Posterior vena cava (tissue), 2 donors: ENCODE measurements at regions of chr12 and their contacts with region 1.

Region 1: GRCh38 chr12:70733385-70733784 is 96.2 kb upstream of the PTPRB start:
- DNase-seq: no peak

Region 2: GRCh38 chr12:70849265-70849960 is 116.0 kb after region 1 on chr12:
- intact Hi-C with region 1: loop called in 1 of 2 experiments (anchors 5 kb)
- DNase-seq: no peak

Region 3: DNA sequence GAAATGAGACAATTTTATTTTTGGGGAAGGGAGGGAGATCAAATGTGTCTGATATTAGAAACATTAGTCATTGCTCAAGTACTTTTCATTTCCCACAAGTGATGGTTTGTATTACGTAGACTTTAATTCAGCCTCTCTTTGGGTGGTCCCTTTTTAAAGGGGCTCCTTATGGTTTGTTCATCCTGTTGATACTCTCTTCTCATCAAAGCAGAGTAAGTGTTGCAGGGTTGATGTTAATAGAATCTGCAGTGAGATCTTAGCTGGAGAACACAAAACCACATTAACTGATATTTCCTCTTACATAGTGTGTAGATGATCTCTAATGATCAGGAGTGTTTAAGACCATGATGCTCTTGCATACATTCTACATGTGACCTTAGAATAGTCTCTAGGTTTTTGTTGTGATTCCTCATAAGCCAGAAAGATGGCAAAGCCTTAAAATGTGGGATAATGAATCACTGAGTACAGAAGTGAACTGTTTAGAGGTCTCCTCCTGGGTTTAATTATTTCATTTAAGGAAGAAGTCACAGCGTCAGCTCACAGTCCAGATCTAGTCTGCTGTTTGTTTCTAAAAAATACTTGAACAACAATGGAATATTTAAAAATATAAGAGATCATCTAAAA is 274.5 kb after region 1 on chr12:
- intact Hi-C with region 1: loop called in 1 of 2 experiments (anchors 5 kb)
- DNase-seq: no peak